ENCODE measurements at regions of chr2 and their contacts with region 1.

Region 1: DNA sequence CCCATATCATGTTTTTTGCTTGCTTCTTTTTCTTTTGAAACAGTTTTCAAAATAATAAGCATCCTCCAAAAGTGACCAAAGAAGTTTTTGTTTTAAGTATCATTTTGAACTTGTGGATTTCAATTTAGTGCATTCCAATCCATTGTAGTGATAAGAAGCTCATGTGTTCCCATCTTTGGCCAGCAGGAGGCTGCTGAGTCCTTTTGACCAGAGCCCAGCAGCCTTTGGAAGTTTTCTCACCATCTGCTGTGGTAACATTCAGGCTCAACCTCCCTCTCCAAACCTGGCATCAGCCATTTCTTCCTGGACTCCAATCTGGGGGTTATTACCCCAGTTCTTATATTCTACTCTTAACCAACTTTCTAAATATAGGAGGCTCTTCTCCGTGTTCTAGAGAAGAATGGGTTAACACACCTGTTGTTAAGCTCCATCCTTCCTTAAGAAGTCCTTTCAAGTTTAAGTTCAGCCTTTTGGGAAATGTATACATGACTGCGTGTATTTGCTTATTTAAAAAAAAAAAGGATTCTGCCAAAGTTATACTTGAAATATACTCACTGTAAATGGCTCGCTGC is 39.0 kb upstream of the MAL start:
- DNase-seq: peak; percentile 61 to 71
- ATAC-seq: peak; percentile 69 to 93; a peak in 3 of 6 replicates
- H3K4me3 ChIP-seq: no peak overlapping the region
- H3K27ac ChIP-seq: no peak overlapping the region
- H3K4me1 ChIP-seq: no peaks in the 10 kb centered on the region
- CTCF ChIP-seq: peak; percentile 56
- EP300 ChIP-seq: no peak
- POLR2A ChIP-seq: no peak
- RAD21 ChIP-seq: peak; percentile 37 to 60; a peak in 4 of 5 replicates

Region 2: GRCh38 chr2:94996305-94997100 is 10.0 kb after region 1 on chr2:
- CTCF ChIA-PET with region 1: interaction called, 17 read pairs
- POLR2A ChIA-PET with region 1: interaction called, 3 read pairs
- DNase-seq: no peak
- ATAC-seq: no peak
- H3K4me3 ChIP-seq: no peak overlapping the region
- H3K27ac ChIP-seq: no peak overlapping the region
- H3K4me1 ChIP-seq: no peaks in the 10 kb centered on the region
- CTCF ChIP-seq: no peak
- EP300 ChIP-seq: no peak
- POLR2A ChIP-seq: no peak
- RAD21 ChIP-seq: no peak

Region 3: GRCh38 chr2:95053543-95053942 is 67.1 kb after region 1 on chr2:
- CTCF ChIA-PET with region 1: interaction called, 10 read pairs
- POLR2A ChIA-PET with region 1: no interaction called
- DNase-seq: peak in 1 of 2 experiments; percentile 37
- ATAC-seq: peak; percentile 40 to 62; a peak in 3 of 6 replicates
- H3K4me3 ChIP-seq: no peak overlapping the region
- H3K27ac ChIP-seq: no peak overlapping the region
- H3K4me1 ChIP-seq: no peaks in the 10 kb centered on the region
- CTCF ChIP-seq: no peak; the same call in 2 of the 3 replicates
- EP300 ChIP-seq: no peak
- POLR2A ChIP-seq: no peak
- RAD21 ChIP-seq: peak in 1 of 2 experiments; percentile 31; a peak in 2 of 5 replicates